ENCODE measurements at regions of chr11 and their contacts with region 1.

Region 1: DNA sequence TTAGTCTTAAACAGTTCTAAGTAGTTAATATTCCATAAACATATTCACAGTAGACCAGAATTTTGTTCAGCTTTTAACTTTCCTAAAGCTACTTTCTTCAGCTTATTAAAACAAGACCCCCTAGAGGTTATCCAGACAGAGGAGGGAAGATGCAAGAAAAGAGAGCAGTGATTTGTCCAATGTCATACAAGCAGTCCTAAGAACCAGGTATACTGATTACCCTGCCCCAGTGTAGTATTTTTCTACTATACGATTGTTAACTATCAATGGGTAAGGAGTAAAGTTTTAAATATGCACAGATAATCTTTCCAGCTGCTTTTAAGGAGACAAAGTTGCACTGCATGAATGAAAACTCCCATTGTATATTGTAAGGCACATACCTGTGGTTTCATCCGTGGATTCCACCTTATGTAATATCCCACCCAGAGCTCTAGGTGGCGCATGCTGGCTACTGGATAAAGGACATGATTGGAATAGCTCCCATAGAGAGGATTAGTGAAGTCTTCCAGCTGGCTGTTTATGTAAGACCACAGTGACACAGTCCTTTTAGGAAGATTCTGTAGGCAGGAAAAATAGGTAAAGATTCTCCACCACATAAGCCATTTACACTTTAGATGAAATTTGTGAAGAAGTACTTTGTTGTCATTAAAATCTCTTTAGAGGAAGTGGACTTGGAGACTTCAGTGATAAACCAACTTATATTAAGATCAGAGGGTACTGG is 45.6 kb downstream of the CEP57 start:
- DNase-seq: peak; percentile 29
- H3K4me3 Mint-ChIP-seq: no peak overlapping the region
- H3K27ac Mint-ChIP-seq: peak overlapping the region; percentile 0
- H3K4me1 Mint-ChIP-seq: no peaks in the 10 kb centered on the region
- H3K27me3 Mint-ChIP-seq: no peaks in the 10 kb centered on the region

Region 2: DNA sequence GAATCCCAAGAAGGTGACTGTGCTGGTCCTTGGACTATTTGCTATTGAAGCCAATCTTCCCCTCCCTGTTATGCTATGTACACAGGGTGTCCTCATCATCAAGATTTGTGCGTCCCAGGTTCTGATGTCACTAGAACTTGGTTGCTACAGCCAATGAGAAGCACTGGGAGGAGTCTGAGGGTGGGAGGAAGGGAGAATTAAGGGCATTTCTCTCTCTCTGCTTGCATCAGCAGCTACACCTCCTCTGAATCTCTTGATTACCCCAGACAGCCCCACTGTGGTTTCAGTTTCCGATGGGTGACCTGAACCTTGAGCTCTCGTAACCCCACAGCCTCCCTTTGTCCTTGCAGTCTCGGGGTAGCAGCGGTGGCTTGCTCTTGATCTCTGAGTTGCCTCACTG is 392.5 kb before region 1 on chr11:
- intact Hi-C with region 1: no loop called
- DNase-seq: no peak
- H3K4me3 Mint-ChIP-seq: no peak overlapping the region
- H3K27ac Mint-ChIP-seq: no peak overlapping the region
- H3K4me1 Mint-ChIP-seq: peaks cover 10% of the 10 kb centered on the region
- H3K27me3 Mint-ChIP-seq: peaks cover 3% of the 10 kb centered on the region

Region 3: GRCh38 chr11:95968585-95968984 is 132.7 kb after region 1 on chr11:
- intact Hi-C with region 1: loop called (anchors 5 kb)
- DNase-seq: no peak
- H3K4me3 Mint-ChIP-seq: no peak overlapping the region
- H3K27ac Mint-ChIP-seq: no peak overlapping the region
- H3K4me1 Mint-ChIP-seq: no peaks in the 10 kb centered on the region
- H3K27me3 Mint-ChIP-seq: peaks cover 3% of the 10 kb centered on the region

Region 4: GRCh38 chr11:96168623-96169022 is 332.7 kb after region 1 on chr11:
- intact Hi-C with region 1: loop called (anchors 5 kb)
- DNase-seq: no peak
- H3K4me3 Mint-ChIP-seq: no peak overlapping the region
- H3K27ac Mint-ChIP-seq: no peak overlapping the region
- H3K4me1 Mint-ChIP-seq: peaks cover 42% of the 10 kb centered on the region
- H3K27me3 Mint-ChIP-seq: no peaks in the 10 kb centered on the region